Cardiac septum (tissue), 1 donor: ENCODE measurements at regions of chr4 and their contacts with region 1.

Region 1: DNA sequence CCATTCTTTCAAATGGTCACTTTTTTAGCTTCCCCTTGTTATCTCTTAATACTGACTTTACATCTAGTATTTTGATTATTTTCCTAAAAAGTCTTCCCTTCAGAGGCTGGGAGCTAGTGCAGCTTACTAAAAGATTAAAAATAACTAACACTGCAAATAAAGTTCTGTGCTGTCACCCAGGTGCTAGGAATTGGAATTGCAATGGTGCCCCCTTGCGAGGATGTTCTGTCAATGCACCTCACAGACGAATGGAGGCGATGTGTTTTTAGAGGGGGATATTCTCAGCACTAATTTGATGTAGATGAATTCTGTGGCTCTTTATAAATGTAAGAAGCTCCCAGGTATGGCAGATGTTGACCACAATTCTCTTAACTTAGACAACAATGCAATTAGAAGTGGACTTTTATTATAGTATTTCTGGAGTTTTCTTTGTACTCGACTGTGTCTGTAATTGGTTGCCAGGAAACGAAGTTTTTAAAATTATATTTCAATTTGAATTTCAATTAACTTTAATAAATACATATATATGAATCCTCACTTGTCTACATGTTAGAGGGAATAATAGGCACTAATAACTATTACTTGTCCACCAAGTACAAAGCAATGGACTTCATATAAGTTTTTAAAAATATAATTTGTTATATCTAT is 22.0 kb upstream of the SMIM31 start:
- DNase-seq: no peak

Region 2: GRCh38 chr4:163568843-163569242 is 1163.1 kb before region 1 on chr4:
- intact Hi-C with region 1: loop called (anchors 5 kb)
- DNase-seq: no peak

Region 3: DNA sequence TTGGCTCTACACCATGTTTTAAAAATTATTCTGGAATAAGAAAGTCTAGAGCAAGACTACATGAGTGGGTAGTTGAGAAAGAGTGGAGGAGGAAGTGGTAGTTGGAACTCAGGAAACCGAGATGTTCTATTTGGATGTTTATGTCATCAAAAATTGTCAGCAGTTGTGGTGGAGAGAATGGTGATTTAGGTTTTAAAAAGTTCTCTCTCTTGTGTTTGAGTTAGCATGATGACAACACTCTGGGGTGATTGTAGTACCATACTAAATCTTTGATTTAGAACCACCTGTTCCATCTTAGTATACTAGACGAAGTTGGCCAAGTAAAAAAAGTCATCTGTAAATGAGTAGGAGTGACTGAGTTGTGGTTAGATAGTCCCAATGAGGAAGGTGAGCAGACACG is 516.2 kb after region 1 on chr4:
- intact Hi-C with region 1: no loop called
- DNase-seq: no peak